Spleen (tissue), 13 donors: ENCODE measurements at regions of chr1 and their contacts with region 1.

Region 1: GRCh38 chr1:177948336-177948972 is 21.4 kb downstream of the SEC16B start:
- DNase-seq: no peak
- H3K4me3 ChIP-seq: no peak overlapping the region
- H3K27ac ChIP-seq: no peak overlapping the region
- H3K4me1 ChIP-seq: peaks cover 0 to 26% (median 0%) of the 10 kb centered on the region in 6 donors
- H3K27me3 ChIP-seq: no peaks in the 10 kb centered on the region
- CTCF ChIP-seq: peak; percentile 48 to 85 (median 78)
- POLR2A ChIP-seq: no peak

Region 2: GRCh38 chr1:178004926-178005391 is 56.5 kb after region 1 on chr1:
- intact Hi-C with region 1: no loop called
- DNase-seq: no peak
- H3K4me3 ChIP-seq: no peak overlapping the region
- H3K27ac ChIP-seq: no peak overlapping the region
- H3K4me1 ChIP-seq: peaks cover 0 to 5% (median 0%) of the 10 kb centered on the region in 6 donors
- H3K27me3 ChIP-seq: no peaks in the 10 kb centered on the region
- CTCF ChIP-seq: no peak
- POLR2A ChIP-seq: no peak

Region 3: GRCh38 chr1:178189814-178190213 is 241.4 kb after region 1 on chr1:
- intact Hi-C with region 1: loop called (anchors 5 kb)
- DNase-seq: peak; percentile 17
- H3K4me3 ChIP-seq: no peak overlapping the region
- H3K27ac ChIP-seq: no peak overlapping the region
- H3K4me1 ChIP-seq: peaks cover 0 to 17% (median 4%) of the 10 kb centered on the region in 6 donors
- H3K27me3 ChIP-seq: no peaks in the 10 kb centered on the region
- CTCF ChIP-seq: peak in 6 of 11 experiments; percentile 25 to 52 (median 44)
- POLR2A ChIP-seq: no peak

Region 4: GRCh38 chr1:178262120-178262500 is 313.7 kb after region 1 on chr1:
- intact Hi-C with region 1: no loop called
- DNase-seq: no peak
- H3K4me3 ChIP-seq: no peak overlapping the region
- H3K27ac ChIP-seq: no peak overlapping the region
- H3K4me1 ChIP-seq: peaks cover 0 to 6% (median 0%) of the 10 kb centered on the region in 6 donors
- H3K27me3 ChIP-seq: no peaks in the 10 kb centered on the region
- CTCF ChIP-seq: no peak
- POLR2A ChIP-seq: no peak